ENCODE measurements at regions of chr3 and their contacts with region 1.

Region 1: DNA sequence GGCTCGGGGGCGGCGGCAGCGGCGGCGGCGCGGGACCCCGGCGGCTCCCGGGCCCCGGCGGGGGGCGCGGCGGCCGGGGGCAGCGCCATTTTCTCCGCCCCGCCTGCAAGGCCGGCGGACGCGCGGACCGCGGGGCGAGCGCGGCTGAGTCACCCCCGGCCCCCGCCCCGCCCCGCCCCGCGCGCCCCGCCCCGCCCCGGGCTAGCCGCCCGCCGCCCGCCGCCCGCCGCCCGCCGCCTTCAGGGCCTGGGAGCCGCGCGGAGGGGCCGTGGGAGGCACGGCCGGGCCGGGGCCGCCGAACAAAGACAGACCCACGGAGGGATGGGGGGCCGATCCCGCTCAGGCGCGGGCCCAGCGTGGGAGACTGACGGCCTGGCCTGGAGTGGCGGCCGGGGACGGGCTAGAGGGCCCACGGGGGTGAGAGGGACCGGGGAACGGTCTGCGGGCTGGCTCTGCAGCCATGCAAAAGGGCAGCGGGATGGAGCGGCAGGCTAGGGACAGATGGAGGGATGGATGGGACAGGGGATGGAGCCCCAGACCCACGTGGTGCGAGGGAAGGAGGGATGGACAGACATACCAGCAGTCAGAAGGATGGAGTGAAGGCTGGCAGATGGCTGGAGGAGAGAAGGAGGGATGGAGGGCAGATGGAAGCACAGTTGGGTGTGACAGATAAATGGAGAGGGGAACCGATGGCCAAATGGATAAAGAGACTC is at the start of gene EIF4E3:
- DNase-seq: peak; percentile 84
- H3K4me3 Mint-ChIP-seq: peak within 1 kb of the TSS; percentile 96
- H3K27ac Mint-ChIP-seq: peak within 1 kb of the TSS; percentile 94
- H3K4me1 Mint-ChIP-seq: peaks cover 71% of the 10 kb centered on the region
- H3K27me3 Mint-ChIP-seq: no peaks in the 10 kb centered on the region
- total RNA-seq, gene EIF4E3: 20.3 and 20.7 TPM in 2 replicates

Region 2: DNA sequence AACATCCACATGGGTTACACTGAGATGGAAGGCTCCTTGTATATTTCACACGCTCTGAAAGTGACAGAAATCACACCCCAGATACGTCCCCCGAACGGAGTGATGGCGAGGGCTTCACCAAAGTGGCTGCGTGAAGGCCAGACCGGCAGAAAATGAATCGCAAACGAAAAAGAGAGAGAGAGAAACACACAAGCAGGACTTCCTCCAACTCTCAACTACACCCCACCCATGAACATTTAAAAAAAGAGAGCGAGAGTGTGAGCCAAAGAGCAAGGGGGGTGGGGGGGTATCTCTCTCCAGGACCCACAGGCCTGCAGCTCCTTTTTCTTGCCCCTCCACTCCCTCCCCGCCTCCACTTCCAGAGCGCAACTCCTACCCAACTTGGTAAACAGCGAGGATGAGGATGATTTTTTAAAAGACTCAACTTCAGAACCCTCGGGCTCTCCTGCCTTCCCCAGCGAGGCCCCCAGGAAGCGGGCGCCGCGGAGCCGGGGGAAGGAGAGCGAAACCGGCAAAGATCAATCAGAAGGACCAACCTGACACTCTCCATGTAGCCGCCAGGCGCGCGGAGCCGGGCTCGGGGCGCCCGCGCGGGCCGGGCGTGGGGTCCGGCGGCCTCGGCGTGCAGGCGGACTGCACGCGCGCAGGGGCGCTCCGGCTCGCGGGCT is 661.0 kb before region 1 on chr3:
- intact Hi-C with region 1: loop called (anchors 5 kb)
- DNase-seq: peak; percentile 92
- H3K4me3 Mint-ChIP-seq: no peak overlapping the region
- H3K27ac Mint-ChIP-seq: no peak overlapping the region
- H3K4me1 Mint-ChIP-seq: peaks cover 55% of the 10 kb centered on the region
- H3K27me3 Mint-ChIP-seq: no peaks in the 10 kb centered on the region

Region 3: GRCh38 chr3:71652781-71653413 is 72.5 kb before region 1 on chr3:
- intact Hi-C with region 1: no loop called
- DNase-seq: peak; percentile 59
- H3K4me3 Mint-ChIP-seq: no peak overlapping the region
- H3K27ac Mint-ChIP-seq: no peak overlapping the region
- H3K4me1 Mint-ChIP-seq: peaks cover 3% of the 10 kb centered on the region
- H3K27me3 Mint-ChIP-seq: no peaks in the 10 kb centered on the region

Region 4: GRCh38 chr3:71859123-71859519 is 133.7 kb after region 1 on chr3:
- intact Hi-C with region 1: loop called (anchors 1 kb)
- DNase-seq: peak; percentile 69
- H3K4me3 Mint-ChIP-seq: no peak overlapping the region
- H3K27ac Mint-ChIP-seq: no peak overlapping the region
- H3K4me1 Mint-ChIP-seq: peaks cover 5% of the 10 kb centered on the region
- H3K27me3 Mint-ChIP-seq: peaks cover 27% of the 10 kb centered on the region

Region 5: DNA sequence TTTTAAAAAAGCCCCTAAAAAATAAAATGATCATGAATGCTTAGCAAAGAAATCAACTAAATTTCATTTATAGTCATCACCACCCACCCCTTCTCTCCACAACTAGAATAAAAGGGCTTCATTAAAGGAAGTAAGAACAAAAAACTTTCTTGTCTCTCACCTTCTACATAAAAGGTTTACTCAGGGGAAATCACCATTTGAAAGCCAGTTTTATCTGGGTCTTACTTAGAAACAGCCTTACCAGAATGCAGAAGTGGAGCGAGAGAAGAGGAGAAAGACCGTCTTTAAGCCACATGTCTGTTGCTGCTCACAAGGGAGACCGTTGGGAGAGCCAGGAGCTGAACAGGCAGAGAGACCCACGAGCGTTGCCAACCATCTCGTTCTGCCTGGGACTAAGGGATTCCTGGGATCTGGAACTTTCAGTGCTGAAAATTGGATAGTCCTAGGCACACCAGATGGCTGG is 409.6 kb after region 1 on chr3:
- intact Hi-C with region 1: loop called (anchors 10 kb)
- DNase-seq: peak; percentile 66
- H3K4me3 Mint-ChIP-seq: peak overlapping the region; percentile 75
- H3K27ac Mint-ChIP-seq: peak overlapping the region; percentile 96
- H3K4me1 Mint-ChIP-seq: peaks cover 39% of the 10 kb centered on the region
- H3K27me3 Mint-ChIP-seq: no peaks in the 10 kb centered on the region

Region 6: GRCh38 chr3:72447059-72447946 is 721.9 kb after region 1 on chr3:
- intact Hi-C with region 1: loop called (anchors 5 kb)
- DNase-seq: peak; percentile 99
- H3K4me3 Mint-ChIP-seq: peak overlapping the region; percentile 92
- H3K27ac Mint-ChIP-seq: peak overlapping the region; percentile 86
- H3K4me1 Mint-ChIP-seq: peaks cover 46% of the 10 kb centered on the region
- H3K27me3 Mint-ChIP-seq: peaks cover 4% of the 10 kb centered on the region

Region 7: DNA sequence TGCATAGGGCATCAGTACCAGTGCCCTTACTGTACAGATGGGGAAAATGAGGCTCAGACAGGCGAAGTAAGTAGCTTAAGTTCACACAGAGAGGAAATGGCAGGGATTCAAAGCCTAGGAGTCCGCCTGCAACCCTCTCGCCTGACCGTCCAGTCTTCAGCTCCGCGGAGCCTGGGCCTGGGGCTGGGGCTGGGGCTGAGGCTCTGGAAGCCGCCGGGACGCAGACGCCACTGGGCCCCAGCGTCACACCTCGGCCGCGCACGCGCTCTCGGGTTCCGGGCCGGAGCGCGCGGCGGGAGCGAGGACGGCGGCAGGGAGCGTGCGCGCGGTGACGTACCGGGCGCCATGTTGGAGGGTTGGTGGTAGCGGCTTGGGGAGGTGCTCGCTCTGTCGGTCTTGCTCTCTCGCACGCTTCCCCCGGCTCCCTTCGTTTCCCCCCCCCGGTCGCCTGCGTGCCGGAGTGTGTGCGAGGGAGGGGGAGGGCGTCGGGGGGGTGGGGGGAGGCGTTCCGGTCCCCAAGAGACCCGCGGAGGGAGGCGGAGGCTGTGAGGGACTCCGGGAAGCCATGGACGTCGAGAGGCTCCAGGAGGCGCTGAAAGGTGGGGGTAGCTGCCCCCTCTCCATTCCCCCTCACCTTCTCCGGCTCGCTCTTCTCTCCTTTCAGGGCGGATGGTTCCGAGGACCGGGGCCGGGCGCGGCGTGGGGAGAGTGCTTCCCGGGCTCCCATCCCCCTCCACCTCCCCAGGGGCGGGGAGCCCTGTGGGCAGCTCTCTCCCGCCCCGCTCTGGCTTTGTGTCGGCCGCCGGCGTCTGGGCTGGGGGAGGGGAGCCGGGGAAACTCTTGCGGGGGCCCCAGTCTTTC is 1271.3 kb after region 1 on chr3 and contains the start of gene PPP4R2:
- intact Hi-C with region 1: loop called (anchors 10 kb)
- DNase-seq: peak; percentile 98
- H3K4me3 Mint-ChIP-seq: peak within 1 kb of the TSS; percentile 89
- H3K27ac Mint-ChIP-seq: peak within 1 kb of the TSS; percentile 89
- H3K4me1 Mint-ChIP-seq: peaks cover 35% of the 10 kb centered on the region
- H3K27me3 Mint-ChIP-seq: no peaks in the 10 kb centered on the region
- total RNA-seq, gene PPP4R2: 105 and 107 TPM in 2 replicates